ENCODE measurements at regions of chr10 and their contacts with region 1.

Region 1: GRCh38 chr10:110137142-110137545 is 70.3 kb upstream of the MXI1 start:
- DNase-seq: no peak
- ATAC-seq: peak; percentile 93
- H3K4me3 ChIP-seq: no peak overlapping the region
- H3K27ac ChIP-seq: no peak overlapping the region
- H3K4me1 ChIP-seq: peaks cover 0 to 3% of the 10 kb centered on the region in 2 donors
- H3K27me3 ChIP-seq: no peaks in the 10 kb centered on the region

Region 2: DNA sequence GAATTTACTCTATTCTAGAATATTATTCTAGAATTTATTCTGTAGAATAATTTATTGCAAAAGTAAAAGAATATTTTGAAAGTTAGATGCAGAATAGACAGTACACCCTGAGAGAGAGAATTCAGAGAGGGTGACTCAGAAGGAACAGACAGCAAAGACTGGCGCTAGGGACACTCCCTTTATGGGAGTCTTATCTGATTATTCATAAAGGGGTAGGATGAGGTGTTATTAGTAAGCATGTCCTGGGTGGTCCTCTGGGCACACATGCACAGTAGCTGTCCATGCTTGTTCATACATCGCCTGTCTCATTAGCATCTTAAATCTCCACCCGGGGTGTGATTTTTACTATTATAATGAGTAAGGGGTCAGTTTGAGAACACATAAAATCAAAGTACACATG is 313.9 kb before region 1 on chr10:
- intact Hi-C with region 1: no loop called
- DNase-seq: no peak
- ATAC-seq: no peak
- H3K4me3 ChIP-seq: no peak overlapping the region
- H3K27ac ChIP-seq: no peak overlapping the region
- H3K4me1 ChIP-seq: no peaks in the 10 kb centered on the region
- H3K27me3 ChIP-seq: no peaks in the 10 kb centered on the region

Region 3: DNA sequence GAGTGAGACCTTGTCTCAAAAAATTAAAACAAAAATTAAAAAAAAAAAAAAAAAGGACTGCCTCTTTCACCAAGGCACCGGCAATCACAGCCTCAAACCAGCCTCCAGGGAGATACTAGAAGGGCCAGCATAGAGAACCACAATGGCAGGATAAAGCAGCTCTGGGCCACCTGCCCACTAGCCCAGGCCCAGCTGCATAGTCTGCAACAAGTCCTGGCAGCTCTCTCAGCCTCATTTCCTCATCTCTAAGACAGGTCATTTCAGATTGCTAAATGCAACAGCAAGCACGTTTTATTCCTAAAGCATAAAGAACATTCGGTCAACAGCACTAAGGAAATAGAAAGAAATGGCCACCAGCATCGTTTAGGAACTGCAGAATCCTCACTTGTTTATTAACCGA is 242.6 kb before region 1 on chr10:
- intact Hi-C with region 1: loop called (anchors 5 to 10 kb)
- DNase-seq: peak; percentile 83
- ATAC-seq: peak; percentile 81
- H3K4me3 ChIP-seq: no peak overlapping the region
- H3K27ac ChIP-seq: peak overlapping the region; percentile 68 to 86
- H3K4me1 ChIP-seq: peaks cover 7 to 19% of the 10 kb centered on the region in 2 donors
- H3K27me3 ChIP-seq: no peaks in the 10 kb centered on the region

Region 4: DNA sequence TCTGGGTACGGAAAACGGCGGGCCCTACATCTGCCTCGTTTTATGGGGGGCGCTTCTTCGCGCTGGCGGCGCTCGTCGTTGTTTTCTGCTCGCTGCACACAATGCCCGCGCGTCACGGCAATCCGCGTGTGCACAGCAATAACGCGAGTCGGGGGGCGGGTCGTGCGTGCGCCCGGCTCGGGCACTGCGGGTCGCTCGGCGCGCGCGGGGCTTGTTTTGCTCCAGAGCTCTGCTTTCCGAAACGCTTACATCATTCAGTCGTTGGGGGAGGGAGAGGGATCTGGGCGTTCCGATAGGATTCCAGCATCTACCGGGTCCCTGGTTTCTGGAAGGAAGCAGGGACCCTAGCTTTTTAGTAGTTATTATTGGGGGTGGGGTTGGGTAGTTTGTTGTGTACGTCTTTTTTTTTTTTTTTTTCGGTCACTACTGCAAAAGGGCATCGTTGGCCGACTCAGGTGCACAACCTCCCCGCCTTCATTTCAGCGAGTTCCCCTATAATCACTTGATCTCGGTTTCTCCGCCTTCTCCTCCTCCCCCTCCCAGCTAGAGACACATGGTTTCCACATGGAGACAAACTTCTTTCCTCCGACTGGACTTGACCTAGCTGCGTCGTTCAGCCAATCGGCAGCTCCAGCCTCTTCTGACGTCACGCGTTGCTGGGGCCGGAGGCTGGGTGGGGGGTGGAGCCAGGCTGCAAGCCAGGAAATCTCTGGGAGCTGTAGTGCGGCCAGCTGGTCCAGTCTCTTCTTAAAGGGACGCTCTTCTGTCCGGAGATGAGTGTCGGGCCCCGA is 73.7 kb after region 1 on chr10:
- intact Hi-C with region 1: loop called in 1 of 2 experiments (anchors 5 kb)
- DNase-seq: peak; percentile 97 to 99
- ATAC-seq: peak; percentile 90
- H3K4me3 ChIP-seq: peak overlapping the region; percentile 63 to 84
- H3K27ac ChIP-seq: peak overlapping the region; percentile 86 to 91
- H3K4me1 ChIP-seq: peaks cover 2 to 5% of the 10 kb centered on the region in 2 donors
- H3K27me3 ChIP-seq: no peaks in the 10 kb centered on the region

Region 5: GRCh38 chr10:110279407-110279986 is 142.4 kb after region 1 on chr10:
- intact Hi-C with region 1: loop called (anchors 2 kb)
- DNase-seq: peak in 1 of 2 donors; percentile 59
- ATAC-seq: peak; percentile 88
- H3K4me3 ChIP-seq: no peak overlapping the region
- H3K27ac ChIP-seq: no peak overlapping the region
- H3K4me1 ChIP-seq: peaks cover 3 to 9% of the 10 kb centered on the region in 2 donors
- H3K27me3 ChIP-seq: no peaks in the 10 kb centered on the region

Region 6: GRCh38 chr10:110547139-110547761 is 410.1 kb after region 1 on chr10:
- intact Hi-C with region 1: loop called in 1 of 2 experiments (anchors 5 kb)
- DNase-seq: no peak
- ATAC-seq: peak; percentile 72
- H3K4me3 ChIP-seq: no peak overlapping the region
- H3K27ac ChIP-seq: no peak overlapping the region
- H3K4me1 ChIP-seq: no peaks in the 10 kb centered on the region
- H3K27me3 ChIP-seq: no peaks in the 10 kb centered on the region